ENCODE measurements at regions of chr17 and their contacts with region 1.

Region 1: GRCh38 chr17:40443583-40444327 is 505 bp downstream of the IGFBP4 start:
- DNase-seq: peak; percentile 95

Region 2: DNA sequence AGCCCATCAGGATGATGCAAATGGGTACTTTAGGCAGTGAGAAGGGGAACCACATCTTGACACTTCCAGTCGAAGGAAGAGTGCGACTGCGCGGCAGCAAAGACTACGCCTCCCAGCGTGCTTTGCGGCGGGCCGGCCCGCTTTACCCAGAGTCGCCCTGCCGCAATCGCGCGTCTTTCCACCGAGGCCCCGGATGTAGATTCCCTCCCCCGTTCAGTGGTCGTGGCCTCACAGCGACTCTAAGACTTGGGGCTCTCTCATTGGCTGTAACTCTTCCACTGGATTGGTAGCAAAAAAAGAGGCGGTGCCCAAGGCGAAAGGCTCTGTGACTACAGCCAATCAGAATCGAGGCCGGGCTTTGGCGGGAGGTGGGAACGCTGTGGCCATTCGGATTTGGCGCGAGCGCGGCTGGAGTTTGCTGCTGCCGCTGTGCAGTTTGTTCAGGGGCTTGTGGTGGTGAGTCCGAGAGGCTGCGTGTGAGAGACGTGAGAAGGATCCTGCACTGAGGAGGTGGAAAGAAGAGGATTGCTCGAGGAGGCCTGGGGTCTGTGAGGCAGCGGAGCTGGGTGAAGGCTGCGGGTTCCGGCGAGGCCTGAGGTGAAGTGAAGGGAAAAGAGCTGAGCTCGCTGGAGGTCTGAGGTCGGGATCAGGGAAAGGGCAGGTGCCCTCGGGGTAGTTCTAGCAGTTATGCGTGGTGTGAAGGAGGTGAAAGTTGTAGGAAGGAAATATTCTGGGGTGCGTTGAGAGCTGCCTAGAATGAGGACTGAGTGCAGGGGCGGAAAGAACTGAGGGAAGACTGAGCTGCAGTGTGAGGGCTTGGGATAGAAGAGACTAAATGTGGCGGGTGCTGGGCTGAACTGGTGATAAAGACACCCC is 156.0 kb before region 1 on chr17 and contains the start of gene CDC6:
- intact Hi-C with region 1: no loop called
- DNase-seq: peak; percentile 100
- total RNA-seq, gene CDC6: 1.4 to 2.5 TPM

Region 3: DNA sequence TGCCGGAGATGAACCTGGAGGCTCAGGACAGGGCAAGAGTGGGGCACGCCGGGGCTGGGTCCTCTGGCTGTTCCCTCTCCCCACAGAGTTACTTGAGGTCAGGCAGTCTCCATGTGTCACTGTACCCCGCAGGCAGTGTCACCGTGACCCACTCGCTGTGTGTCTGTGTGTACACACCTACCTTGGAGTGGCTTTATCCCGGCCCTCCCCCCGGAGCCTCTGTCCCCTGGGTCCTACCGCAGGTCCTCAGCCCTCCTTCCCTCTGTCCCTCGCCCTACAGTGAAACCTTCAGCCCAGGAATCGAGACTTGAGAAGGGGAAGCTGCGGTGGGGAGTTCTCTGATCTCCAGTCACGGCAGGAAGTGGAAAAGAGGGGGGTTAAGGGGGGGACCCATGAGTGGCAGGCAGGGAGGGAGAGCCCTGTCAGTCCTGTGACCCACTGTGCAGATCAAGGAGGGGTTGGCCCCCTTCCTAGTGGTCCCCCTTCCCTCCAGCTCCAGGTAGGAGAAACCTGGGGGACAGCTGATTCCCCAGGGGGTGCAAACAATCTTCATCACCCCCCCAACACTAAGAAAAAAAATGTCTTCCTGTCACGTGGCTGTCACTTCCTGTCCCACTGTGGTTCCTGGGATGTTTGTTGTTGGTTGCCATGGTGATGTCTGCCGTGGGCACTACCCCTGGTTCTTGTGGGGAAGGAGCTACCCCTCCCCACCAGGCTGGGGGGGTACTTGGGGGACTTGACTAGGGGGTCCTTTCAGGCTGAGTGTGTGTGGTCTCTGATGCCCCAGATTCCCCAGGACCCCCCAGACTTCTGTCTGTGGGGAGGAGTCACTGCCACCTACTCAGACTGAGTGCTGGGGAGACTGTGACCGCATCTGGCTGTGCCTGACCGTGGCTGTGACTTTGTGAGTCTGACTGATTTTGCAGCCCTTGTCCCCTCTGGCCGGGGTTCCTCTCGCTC is 121.1 kb before region 1 on chr17:
- intact Hi-C with region 1: no loop called
- DNase-seq: peak; percentile 93

Region 4: GRCh38 chr17:40474419-40475002 is 30.8 kb after region 1 on chr17:
- intact Hi-C with region 1: loop called (anchors 1 to 2 kb)
- DNase-seq: no peak

Region 5: GRCh38 chr17:40480501-40481003 is 36.8 kb after region 1 on chr17:
- intact Hi-C with region 1: loop called (anchors 1 to 2 kb)
- DNase-seq: no peak

Region 6: DNA sequence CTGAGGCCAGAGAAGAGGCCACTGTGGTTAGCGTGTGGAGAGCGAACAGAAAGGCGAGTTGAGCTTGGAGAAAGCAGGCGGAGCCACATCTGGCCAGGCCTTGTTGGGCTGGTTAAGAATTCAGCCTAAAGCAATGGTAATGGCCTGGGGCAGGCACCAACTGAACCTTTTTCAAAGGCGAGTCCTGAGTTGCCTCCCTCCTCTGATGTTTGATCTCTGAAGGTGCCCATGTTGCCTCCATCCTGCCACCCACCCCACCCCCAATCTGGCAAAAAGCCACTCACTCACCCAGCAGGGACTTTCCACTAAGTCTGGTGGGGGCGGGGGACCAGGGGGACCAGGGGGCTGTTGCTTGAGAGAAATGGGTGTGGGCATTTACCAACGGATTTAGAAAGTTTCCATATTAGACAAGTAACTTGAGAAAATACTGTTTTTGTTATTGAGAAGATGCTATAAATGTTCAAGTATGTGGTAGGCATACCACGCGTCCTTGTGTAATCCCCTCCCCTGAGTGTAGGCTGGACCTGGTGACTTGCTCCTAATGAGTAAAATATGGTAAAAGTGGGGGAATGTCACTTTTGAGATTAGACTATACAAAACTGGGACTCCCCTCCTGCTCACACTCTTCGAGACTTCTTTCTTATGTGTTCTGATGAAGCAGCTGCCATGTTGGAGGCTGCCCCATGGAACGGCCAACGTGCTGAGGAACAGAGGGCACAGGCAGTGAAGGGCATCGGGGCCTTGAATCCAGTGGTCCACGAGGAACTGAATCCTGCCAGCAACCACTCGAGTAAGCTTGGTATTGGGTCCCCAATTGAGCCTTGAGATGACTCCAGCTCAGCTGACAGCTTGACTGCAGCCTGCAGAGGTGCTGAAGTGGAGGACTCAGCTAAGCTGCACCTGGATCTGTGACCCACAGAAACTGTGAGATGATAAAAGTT is 87.6 kb after region 1 on chr17:
- intact Hi-C with region 1: loop called in 1 of 2 experiments (anchors 5 kb)
- DNase-seq: peak; percentile 42

Region 7: DNA sequence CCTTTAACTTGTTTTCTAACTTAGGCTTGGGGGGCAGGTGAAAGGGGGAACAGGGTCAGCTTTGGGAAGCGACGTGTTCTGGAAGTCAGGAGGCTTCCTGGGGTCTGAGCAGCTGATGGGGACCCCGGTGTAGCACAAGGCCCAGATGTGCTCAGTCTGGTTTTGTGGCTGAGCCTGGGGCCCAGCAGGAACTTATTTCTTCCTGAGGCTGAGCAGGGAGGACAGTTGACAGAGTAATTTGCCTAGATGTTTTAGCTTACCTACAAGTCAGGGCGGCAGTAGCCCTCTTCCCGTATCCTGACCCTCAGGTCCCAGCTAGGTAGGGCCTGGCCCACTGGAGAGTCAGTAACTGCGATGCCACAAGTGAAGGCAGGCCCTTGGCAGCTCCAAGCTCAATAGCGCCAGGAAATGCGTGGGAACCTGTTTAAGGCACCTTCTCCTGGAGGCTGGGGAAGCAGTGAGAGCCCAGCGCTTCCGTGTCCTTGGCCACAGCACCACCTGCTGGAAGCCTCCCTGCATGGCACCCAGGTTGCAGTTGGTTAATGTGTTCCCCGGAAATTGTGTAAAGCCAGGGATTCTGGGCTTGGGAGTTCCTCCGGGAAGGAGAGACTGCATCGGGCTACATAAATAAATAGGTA is 116.3 kb after region 1 on chr17:
- intact Hi-C with region 1: loop called in 1 of 2 experiments (anchors 10 kb)
- DNase-seq: peak; percentile 96